ENCODE measurements at regions of chr16 and their contacts with region 1.

Region 1: DNA sequence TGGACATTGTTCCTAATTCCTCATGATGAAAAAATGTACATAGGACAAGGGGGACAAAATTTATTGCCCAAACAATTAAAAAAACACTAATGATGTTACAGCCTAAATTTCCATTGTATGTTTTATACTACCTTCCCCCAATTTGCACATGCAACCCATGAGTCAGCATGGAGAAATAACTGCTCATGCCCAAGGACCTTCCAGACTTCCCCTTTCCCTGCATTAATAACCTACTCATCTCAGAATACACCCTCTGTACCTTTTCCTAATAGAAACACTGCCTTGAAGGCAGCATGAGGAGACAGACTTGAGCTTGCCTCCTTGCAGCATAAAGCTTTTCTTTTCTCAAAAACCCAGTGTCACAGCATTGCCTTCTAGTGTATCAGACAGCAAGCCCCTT is 2402.8 kb downstream of the TP53TG3F start:
- DNase-seq: no peak
- ATAC-seq: no peak
- H3K4me3 ChIP-seq: no peak overlapping the region
- H3K27ac ChIP-seq: no peak overlapping the region
- H3K4me1 ChIP-seq: no peaks in the 10 kb centered on the region
- H3K27me3 ChIP-seq: no peaks in the 10 kb centered on the region
- CTCF ChIP-seq: no peak

Region 2: GRCh38 chr16:35431829-35432663 is 430.2 kb before region 1 on chr16:
- intact Hi-C with region 1: loop called in 1 of 10 experiments (anchors 10 kb)
- DNase-seq: no peak
- ATAC-seq: no peak
- H3K4me3 ChIP-seq: no peak overlapping the region
- H3K27ac ChIP-seq: no peak overlapping the region
- H3K4me1 ChIP-seq: no peaks in the 10 kb centered on the region
- H3K27me3 ChIP-seq: no peaks in the 10 kb centered on the region
- CTCF ChIP-seq: peak in 8 of 9 donors; percentile 26 to 67 (median 52)

Region 3: GRCh38 chr16:35873472-35873871 is 11.2 kb after region 1 on chr16:
- intact Hi-C with region 1: loop called in 1 of 10 experiments (anchors 2 kb)
- DNase-seq: no peak
- ATAC-seq: no peak
- H3K4me3 ChIP-seq: no peak overlapping the region
- H3K27ac ChIP-seq: no peak overlapping the region
- H3K4me1 ChIP-seq: no peaks in the 10 kb centered on the region
- H3K27me3 ChIP-seq: no peaks in the 10 kb centered on the region
- CTCF ChIP-seq: no peak